ENCODE measurements at regions of chr14 and their contacts with region 1.

Region 1: GRCh38 chr14:63713765-63714164 is 14.1 kb downstream of the SGPP1 start:
- DNase-seq: peak; percentile 19
- H3K4me3 ChIP-seq: no peak overlapping the region
- H3K27ac ChIP-seq: no peak overlapping the region
- H3K4me1 ChIP-seq: peaks cover 11% of the 10 kb centered on the region
- H3K27me3 ChIP-seq: no peaks in the 10 kb centered on the region
- CTCF ChIP-seq: no peak
- POLR2A ChIP-seq: no peak

Region 2: DNA sequence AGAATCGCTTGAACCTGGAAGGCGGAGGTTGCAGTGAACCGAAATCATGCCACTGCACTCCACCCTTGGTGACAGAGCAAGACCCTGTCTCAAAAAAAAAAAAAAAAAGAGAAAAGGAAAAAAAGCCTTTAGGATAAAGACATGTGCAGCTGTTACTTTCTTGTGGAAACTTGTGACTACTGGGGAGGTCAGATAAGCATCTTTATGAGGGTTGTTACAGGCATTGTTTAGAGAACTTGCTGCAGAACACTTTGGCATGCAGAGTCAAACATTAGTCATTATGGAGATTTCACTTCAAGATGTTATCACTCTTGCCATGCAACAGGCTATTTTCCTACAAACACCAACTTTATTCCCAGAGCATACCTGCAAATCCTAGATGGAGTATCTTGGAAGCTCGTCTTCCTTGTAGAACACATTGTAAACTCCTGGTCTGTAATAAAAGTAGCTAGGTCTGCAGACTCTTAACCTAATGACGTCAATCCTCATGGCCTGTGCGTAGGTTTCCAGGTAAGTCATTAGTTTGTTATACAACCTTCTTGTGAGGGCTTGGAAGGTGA is 35.9 kb before region 1 on chr14:
- CTCF ChIA-PET with region 1: interaction called, 4 read pairs
- POLR2A ChIA-PET with region 1: no interaction called
- dilution Hi-C with region 1: no loop called
- intact Hi-C with region 1: loop called (anchors 5 kb)
- DNase-seq: peak; percentile 94
- H3K4me3 ChIP-seq: no peak overlapping the region
- H3K27ac ChIP-seq: peak overlapping the region; percentile 43
- H3K4me1 ChIP-seq: peaks cover 10% of the 10 kb centered on the region
- H3K27me3 ChIP-seq: no peaks in the 10 kb centered on the region
- CTCF ChIP-seq: no peak
- POLR2A ChIP-seq: no peak

Region 3: DNA sequence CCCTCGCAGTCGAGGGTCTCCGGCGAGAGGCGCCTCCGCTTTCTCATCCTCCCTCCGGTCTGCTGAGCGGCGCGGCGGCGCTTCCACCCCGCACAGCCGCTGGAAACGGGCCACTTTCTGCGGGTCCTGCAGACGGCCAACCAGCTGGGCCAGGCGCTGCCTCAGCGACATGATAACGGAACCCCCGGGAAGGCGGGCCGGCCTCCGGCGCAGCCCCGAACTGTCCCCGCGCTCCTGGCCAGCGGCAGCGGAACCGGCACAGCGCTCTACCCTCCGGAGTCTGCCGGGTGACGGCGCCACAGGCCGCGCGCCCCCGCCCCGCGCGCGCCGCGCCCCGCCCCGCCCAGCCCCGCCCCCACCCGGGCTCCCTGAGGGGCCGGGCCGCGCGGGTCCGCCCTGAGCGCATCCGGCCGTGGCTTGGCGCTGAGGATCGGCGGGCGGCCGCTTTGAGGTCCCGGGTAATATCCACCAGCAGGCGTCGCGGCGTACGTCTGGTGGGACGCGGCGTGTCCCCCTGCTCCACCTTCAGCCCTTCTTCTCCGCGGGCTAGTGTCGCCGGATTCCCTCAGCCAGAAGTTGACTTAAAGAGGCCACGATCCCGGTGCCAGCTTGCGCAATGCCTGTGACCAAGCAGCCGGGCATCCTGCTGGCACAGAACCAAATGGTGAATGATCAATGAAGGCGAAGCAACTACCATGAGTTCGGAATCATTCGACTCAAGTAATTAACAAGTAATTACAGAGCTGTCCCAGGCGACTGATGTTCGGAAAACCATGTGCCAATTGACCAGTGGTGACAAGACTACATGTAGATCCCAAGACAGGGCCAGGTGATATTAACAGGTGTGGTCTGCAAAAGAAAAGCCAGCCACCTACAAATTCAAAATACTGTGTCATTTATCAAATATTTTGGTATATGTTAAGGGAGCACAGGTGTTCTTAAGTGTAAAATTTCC is 14.3 kb after region 1 on chr14 and contains the start of gene SGPP1:
- CTCF ChIA-PET with region 1: interaction called, 12 read pairs
- POLR2A ChIA-PET with region 1: no interaction called
- dilution Hi-C with region 1: no loop called
- intact Hi-C with region 1: no loop called
- DNase-seq: peak; percentile 71
- H3K4me3 ChIP-seq: peak within 1 kb of the TSS; percentile 28 to 80 (median 63)
- H3K27ac ChIP-seq: peak within 1 kb of the TSS; percentile 46
- H3K4me1 ChIP-seq: peaks cover 17% of the 10 kb centered on the region
- H3K27me3 ChIP-seq: no peaks in the 10 kb centered on the region
- CTCF ChIP-seq: peak; percentile 21 to 52
- POLR2A ChIP-seq: peak; percentile 79
- total RNA-seq, gene SGPP1: 7.6 and 7.9 TPM in 2 replicates